Dorsolateral prefrontal cortex (tissue), 120 donors: ENCODE measurements at regions of chr18 and their contacts with region 1.

Region 1: GRCh38 chr18:24600076-24600654 is 139.7 kb downstream of the HRH4 start:
- DNase-seq: peak in 1 of 10 donors; percentile 28
- H3K4me3 ChIP-seq: no peak overlapping the region
- H3K27ac ChIP-seq: no peak overlapping the region
- H3K27me3 ChIP-seq: peaks cover 0 to 9% (median 0%) of the 10 kb centered on the region in 45 donors
- CTCF ChIP-seq: peak; percentile 44 to 87 (median 72)

Region 2: GRCh38 chr18:24446953-24447538 is 153.1 kb before region 1 on chr18:
- intact Hi-C with region 1: no loop called
- DNase-seq: no peak
- H3K4me3 ChIP-seq: no peak overlapping the region
- H3K27ac ChIP-seq: no peak overlapping the region
- H3K27me3 ChIP-seq: no peaks in the 10 kb centered on the region
- CTCF ChIP-seq: peak in 9 of 56 donors; percentile 8 to 37 (median 17)

Region 3: DNA sequence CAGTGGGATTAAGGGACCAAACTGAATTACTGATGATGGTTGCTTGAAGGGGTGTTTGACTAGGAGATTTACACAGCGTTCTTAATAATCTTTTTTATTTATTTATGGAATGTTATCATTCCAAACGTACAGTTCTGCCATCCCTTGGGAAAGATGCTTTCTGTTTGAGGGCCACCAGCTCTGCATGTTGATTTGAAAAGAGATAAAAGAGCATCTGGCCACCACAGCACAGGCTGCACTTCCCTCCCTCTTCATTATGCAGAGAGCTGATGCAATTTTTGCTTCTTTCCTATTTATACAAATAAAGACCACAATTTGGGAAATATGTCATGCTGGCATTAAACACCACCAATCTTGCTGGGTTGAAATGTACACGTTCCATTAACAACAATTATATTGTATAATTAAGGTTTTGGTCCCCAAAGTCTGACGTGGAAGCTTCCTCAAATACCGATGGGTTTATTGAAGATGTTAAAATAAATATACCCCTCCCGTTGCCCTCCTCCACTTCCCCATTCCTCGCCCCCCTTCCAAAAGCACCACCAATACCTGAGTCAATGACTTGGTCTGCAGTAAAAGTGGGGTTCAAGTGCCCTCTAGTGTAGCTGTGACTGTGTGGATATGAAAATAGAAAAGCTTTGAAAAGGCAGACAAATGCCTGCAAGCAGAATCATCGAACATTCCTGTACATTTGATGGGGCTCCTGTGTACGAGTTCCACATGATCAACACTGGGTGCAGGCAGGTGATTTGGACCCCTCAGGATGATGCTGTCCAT is 72.2 kb after region 1 on chr18:
- intact Hi-C with region 1: loop called in 1 of 2 experiments (anchors 2 kb)
- DNase-seq: peak in 2 of 10 donors; percentile 12 to 37
- H3K4me3 ChIP-seq: peak overlapping the region in 1 of 59 donors; percentile 5
- H3K27ac ChIP-seq: no peak overlapping the region
- H3K27me3 ChIP-seq: peaks cover 0 to 3% (median 0%) of the 10 kb centered on the region in 45 donors
- CTCF ChIP-seq: peak in 37 of 56 donors; percentile 7 to 62 (median 38)